ENCODE measurements at regions of chr16 and their contacts with region 1.

Region 1: DNA sequence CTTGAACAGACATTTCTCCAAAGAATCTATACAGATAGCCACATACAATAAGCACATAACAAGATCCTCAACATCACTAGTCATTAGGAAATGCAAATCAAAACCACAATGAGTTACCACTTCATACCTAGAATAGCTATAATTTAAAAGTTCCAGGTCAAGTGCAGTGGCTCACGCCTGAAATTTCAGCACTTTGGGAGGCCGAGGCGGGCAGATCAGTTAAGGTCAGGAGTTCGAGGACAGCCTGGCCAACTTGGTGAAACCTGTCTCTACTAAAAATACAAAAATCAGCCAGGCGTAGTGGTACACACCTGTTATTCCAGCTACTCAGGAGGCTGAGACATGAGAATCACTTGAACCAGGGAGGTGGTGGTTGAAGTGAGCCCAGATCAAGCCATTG is 19.9 kb downstream of the RANBP10 start:
- DNase-seq: no peak
- ATAC-seq: no peak
- H3K4me3 Mint-ChIP-seq: no peak overlapping the region
- H3K27ac Mint-ChIP-seq: peak overlapping the region; percentile 30
- H3K4me1 Mint-ChIP-seq: peaks cover 32% of the 10 kb centered on the region
- H3K27me3 Mint-ChIP-seq: no peaks in the 10 kb centered on the region
- CTCF ChIP-seq: no peak

Region 2: DNA sequence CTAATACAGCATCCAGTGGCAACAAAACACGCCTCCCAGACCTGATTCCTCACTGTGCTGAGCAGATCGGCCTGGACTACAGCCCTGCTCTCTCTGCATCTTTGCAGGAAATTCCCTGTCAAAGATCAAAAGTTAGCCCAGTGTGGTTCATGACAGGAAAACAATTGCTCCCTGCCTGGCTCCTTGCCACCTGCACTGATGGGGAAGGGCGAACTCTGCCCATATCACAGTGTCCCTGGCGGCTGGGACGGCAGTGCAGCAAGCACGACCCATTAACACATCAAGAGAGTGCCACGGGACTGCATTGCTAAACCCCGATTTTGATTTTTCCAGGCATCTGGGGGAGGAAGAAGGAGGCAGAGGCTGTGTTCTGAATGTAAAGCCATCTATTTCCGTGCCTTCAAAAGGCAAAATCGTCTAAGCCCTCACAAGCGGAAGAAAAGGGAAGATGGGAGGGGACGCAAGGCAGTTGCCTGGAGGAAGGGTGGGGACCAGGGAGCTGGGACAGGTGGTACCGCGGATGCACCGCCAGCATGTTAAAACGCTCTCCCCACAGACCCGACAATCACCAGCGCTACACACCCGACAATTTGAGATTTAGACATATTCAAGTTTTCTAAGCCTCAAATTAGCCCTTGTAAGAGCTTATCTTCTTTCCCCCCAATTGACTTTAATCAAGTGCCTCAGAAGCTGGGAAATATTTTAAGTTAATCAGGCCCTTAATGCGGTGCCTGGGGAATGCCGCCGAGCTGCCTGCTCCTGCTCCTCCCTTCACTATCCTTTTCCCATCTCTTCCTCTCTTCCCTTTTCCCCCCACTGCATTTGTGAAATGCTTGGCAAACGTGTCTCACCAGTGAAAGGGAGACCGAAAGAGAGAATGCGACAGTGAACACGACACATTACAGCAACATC is 1658.8 kb before region 1 on chr16:
- CTCF ChIA-PET with region 1: no interaction called
- POLR2A ChIA-PET with region 1: no interaction called
- intact Hi-C with region 1: no loop called
- DNase-seq: no peak
- ATAC-seq: no peak
- H3K4me3 Mint-ChIP-seq: no peak overlapping the region
- H3K27ac Mint-ChIP-seq: no peak overlapping the region
- H3K4me1 Mint-ChIP-seq: no peaks in the 10 kb centered on the region
- H3K27me3 Mint-ChIP-seq: peaks cover 24% of the 10 kb centered on the region
- CTCF ChIP-seq: no peak

Region 3: DNA sequence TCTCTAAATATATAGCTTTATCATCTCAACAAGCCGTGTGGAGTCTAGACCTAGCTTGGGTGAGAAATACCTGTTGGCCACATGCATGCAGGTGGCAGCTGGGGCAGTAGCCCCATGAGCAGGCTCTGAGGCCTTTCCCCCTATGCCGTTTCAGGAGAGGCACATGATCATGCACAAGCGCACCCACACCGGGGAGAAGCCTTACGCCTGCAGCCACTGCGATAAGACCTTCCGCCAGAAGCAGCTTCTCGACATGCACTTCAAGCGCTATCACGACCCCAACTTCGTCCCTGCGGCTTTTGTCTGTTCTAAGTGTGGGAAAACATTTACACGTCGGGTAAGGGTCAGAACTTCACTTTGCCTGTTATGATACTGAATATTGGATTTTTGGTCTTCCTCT is 158.3 kb before region 1 on chr16:
- CTCF ChIA-PET with region 1: no interaction called
- POLR2A ChIA-PET with region 1: no interaction called
- intact Hi-C with region 1: no loop called
- DNase-seq: no peak
- ATAC-seq: no peak
- H3K4me3 Mint-ChIP-seq: no peak overlapping the region
- H3K27ac Mint-ChIP-seq: no peak overlapping the region
- H3K4me1 Mint-ChIP-seq: no peaks in the 10 kb centered on the region
- H3K27me3 Mint-ChIP-seq: no peaks in the 10 kb centered on the region
- CTCF ChIP-seq: no peak

Region 4: DNA sequence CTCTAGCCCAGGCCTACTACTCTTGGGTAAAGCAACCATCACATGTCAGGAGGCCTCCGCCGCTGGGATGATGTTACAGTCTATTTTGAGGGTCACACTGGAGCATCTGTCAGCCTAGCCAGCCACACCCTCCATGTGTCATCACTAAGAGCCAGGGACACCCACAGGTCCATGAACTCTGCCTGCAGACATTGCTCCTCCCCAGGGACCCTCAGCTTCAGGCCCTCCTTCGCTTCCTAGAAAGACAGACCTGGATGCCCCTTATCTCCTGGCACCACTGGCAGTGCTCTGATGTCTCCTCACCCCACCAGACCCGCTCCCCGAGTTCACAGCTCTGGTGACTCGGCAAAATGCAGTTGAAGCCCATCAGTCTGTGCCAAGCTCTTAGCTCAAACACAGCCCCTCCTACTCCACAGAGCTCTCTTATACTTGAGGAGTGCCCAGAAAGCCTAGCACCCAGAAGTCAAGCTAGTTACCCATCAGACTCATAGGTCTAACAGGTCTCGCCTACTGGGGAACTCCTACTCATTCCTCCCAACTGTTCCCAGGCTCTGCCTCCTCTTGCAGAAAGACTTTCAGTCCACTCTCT is 13.9 kb after region 1 on chr16:
- CTCF ChIA-PET with region 1: interaction called, 4 read pairs
- POLR2A ChIA-PET with region 1: interaction called, 6 read pairs
- intact Hi-C with region 1: loop called (anchors 2 kb)
- DNase-seq: no peak
- ATAC-seq: no peak
- H3K4me3 Mint-ChIP-seq: no peak overlapping the region
- H3K27ac Mint-ChIP-seq: peak overlapping the region; percentile 56
- H3K4me1 Mint-ChIP-seq: peaks cover 72% of the 10 kb centered on the region
- H3K27me3 Mint-ChIP-seq: no peaks in the 10 kb centered on the region
- CTCF ChIP-seq: no peak

Region 5: GRCh38 chr16:68013440-68013839 is 226.9 kb after region 1 on chr16:
- CTCF ChIA-PET with region 1: no interaction called
- POLR2A ChIA-PET with region 1: no interaction called
- intact Hi-C with region 1: no loop called
- DNase-seq: no peak
- ATAC-seq: no peak
- H3K4me3 Mint-ChIP-seq: no peak overlapping the region
- H3K27ac Mint-ChIP-seq: no peak overlapping the region
- H3K4me1 Mint-ChIP-seq: peaks cover 11% of the 10 kb centered on the region
- H3K27me3 Mint-ChIP-seq: no peaks in the 10 kb centered on the region
- CTCF ChIP-seq: no peak

Measured in activated B cell treated with CpG ODN at 0.5 μM for 24 hours (primary cell).